Aorta (tissue), 5 donors: ENCODE measurements at regions of chr6 and their contacts with region 1.

Region 1: DNA sequence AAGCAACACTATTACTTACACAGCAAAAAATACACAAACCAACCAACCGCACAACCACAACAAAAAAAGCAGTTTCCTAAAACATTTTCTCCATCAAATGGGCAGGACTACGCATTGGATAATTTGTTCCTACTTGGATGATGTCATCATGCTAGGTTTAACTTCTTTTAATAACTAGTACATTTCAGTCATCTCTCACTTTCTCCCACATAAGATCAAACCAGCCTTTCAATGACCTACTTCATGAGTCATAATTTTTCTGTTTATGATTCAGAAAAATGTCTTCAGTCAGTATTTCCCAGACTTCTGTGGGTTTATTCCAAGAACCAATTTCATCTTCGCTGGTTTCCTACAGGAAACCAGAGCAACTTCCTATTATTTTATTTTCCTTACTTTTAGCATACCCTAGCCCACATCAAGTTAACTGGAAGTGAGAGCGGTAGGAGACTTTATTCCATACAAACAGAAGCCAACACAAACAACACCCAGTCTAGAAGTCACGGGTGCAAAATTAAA is 134.2 kb downstream of the GMDS start:
- DNase-seq: no peak
- ATAC-seq: peak; percentile 78
- H3K4me3 ChIP-seq: peak overlapping the region in 1 of 2 donors; percentile 89
- H3K27ac ChIP-seq: peak overlapping the region in 1 of 2 donors; percentile 77
- H3K4me1 ChIP-seq: peaks cover 3 to 5% of the 10 kb centered on the region in 2 donors
- H3K27me3 ChIP-seq: no peaks in the 10 kb centered on the region

Region 2: DNA sequence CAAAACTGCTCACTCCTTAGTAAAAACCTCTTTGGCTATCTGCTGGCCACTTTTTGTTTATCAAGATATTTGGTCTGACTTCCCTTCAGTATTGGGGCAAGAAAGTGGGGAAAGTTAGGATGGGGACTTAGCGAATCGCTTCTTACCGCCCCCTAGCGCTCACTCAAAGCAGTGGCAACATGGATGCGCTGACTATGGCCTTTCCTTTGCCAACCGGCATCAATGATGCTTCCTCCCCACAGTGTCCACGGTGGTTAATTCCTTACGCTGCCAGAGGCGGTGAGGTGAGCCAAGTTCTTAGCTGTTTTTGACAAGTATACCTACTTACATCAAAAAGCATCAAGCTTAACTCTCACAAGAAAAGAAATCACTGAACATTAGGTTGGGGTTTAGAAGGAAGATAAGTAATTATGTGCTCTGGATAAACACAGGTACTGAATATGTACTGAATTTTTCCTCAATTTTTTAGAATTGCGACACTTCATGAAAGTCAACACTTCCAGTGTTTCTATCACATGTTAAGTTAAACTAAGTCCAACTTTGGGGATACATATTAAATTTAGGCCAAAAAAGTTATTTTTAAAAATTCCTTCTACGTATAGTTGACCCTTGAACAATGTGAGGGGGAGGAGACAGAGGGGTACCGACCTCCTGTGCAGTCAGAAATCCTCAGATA is 47.5 kb after region 1 on chr6:
- intact Hi-C with region 1: loop called (anchors 5 to 10 kb)
- DNase-seq: no peak
- ATAC-seq: no peak
- H3K4me3 ChIP-seq: no peak overlapping the region
- H3K27ac ChIP-seq: no peak overlapping the region
- H3K4me1 ChIP-seq: no peaks in the 10 kb centered on the region
- H3K27me3 ChIP-seq: no peaks in the 10 kb centered on the region

Region 3: GRCh38 chr6:2196079-2196679 is 85.0 kb after region 1 on chr6:
- intact Hi-C with region 1: loop called (anchors 5 to 10 kb)
- DNase-seq: no peak
- ATAC-seq: peak; percentile 80
- H3K4me3 ChIP-seq: no peak overlapping the region
- H3K27ac ChIP-seq: no peak overlapping the region
- H3K4me1 ChIP-seq: peaks cover 0 to 2% of the 10 kb centered on the region in 2 donors
- H3K27me3 ChIP-seq: no peaks in the 10 kb centered on the region

Region 4: DNA sequence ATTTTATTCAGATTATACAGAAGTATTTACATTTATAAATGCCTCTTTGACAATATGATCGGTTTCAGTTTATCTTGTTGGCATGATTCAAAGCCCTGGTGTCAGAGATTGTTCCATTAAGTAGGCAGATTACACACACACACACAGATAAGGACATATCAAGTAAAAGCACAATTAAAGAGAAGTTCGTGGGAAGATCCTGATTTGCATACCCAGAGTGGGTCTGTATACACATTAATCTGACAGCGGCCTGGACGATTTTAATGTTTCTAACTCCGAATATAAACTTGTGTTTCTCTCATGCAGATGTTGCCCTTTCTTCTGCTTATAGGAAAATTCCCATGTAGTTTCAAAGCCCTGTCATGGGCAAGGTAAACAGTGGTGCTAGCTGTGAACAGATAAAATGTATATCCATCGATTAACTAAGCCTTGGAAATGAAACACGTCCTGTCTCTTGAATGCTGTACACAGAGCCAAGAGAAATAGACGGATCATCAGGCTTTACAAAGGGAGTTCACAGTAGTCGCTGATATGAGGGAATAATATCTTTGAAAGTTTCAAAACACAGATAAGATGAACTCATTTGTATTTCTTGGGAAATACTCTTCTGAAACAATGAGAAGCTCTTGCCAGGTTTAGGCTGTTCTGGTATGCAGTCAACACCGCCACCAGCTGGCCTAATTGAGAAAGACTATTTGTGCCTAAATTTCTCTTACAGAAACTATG is 242.4 kb after region 1 on chr6:
- intact Hi-C with region 1: loop called (anchors 5 to 10 kb)
- DNase-seq: peak; percentile 66 to 83
- ATAC-seq: peak; percentile 89
- H3K4me3 ChIP-seq: no peak overlapping the region
- H3K27ac ChIP-seq: peak overlapping the region; percentile 61 to 93
- H3K4me1 ChIP-seq: peaks cover 0 to 6% of the 10 kb centered on the region in 2 donors
- H3K27me3 ChIP-seq: no peaks in the 10 kb centered on the region

Region 5: DNA sequence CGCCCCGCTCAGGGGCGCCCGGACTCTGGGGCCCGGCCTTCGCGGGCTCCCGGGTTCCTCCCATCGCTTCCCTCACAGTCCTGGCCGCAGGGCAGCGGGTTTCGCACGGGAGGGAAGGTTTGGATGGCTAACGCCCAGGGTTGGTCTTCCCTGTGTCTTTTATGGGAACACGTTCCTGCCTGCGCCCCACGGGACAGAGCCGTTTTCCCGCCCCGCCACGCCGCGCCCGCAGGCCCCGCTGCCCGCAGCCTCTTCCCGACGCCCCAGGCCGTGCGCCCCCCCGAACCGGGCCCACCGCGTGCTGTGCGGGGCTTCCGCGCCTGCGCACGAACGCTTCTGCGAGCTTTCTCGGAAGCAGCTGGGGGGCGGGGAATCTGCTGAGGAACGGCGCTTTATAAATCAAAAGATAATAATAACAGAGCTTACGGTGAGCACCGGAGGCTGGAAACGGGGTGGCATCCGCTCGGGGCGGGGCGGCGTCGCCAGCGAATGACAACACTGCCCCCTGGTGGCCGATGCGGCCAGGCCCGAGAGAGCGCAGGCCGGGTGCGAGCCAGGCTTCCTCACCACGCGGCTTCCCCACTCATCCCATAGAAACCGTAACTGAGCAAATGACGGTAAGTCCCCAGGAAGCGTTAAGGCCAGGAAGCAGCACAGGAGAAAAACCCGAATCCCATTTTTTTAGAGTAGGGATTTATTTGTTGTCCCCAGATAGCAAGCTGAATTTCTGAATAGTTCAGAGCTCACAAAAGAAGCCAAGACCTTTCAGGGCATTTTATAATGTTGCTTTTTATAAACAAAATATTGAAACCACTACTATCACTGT is 523.1 kb after region 1 on chr6:
- intact Hi-C with region 1: loop called in 1 of 2 experiments (anchors 10 kb)
- DNase-seq: peak; percentile 94 to 98
- ATAC-seq: peak; percentile 96
- H3K4me3 ChIP-seq: no peak overlapping the region
- H3K27ac ChIP-seq: peak overlapping the region; percentile 97 to 100
- H3K4me1 ChIP-seq: peaks cover 6 to 11% of the 10 kb centered on the region in 2 donors
- H3K27me3 ChIP-seq: no peaks in the 10 kb centered on the region